Left colon (tissue), 2 donors: ENCODE measurements at regions of chr19 and their contacts with region 1.

Region 1: DNA sequence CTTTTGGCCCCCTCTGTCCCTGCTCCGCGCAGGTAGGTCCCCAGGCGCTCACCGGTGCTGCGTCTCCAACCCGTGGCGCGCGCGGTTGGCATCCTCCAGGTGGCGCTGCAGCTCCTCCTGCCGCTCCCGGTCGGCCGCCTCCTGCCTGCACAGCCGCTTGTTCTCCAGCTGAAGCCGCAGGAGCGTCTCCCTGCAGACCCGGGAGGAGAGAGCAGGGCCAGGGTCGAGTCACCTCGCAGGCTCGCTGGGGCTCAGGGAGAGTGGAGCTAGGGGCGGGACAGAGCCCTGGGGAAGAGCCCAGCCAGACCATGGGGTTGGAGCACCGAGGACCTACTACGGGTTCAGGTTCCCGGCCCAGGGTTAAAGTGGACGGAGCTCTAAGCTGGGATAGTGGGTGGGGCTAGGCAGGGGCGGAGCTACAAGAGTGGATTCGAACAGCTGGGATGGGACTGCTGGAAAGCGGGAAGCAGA is 9.3 kb downstream of the HOOK2 start:
- DNase-seq: peak; percentile 70 to 93
- ATAC-seq: peak; percentile 85

Region 2: DNA sequence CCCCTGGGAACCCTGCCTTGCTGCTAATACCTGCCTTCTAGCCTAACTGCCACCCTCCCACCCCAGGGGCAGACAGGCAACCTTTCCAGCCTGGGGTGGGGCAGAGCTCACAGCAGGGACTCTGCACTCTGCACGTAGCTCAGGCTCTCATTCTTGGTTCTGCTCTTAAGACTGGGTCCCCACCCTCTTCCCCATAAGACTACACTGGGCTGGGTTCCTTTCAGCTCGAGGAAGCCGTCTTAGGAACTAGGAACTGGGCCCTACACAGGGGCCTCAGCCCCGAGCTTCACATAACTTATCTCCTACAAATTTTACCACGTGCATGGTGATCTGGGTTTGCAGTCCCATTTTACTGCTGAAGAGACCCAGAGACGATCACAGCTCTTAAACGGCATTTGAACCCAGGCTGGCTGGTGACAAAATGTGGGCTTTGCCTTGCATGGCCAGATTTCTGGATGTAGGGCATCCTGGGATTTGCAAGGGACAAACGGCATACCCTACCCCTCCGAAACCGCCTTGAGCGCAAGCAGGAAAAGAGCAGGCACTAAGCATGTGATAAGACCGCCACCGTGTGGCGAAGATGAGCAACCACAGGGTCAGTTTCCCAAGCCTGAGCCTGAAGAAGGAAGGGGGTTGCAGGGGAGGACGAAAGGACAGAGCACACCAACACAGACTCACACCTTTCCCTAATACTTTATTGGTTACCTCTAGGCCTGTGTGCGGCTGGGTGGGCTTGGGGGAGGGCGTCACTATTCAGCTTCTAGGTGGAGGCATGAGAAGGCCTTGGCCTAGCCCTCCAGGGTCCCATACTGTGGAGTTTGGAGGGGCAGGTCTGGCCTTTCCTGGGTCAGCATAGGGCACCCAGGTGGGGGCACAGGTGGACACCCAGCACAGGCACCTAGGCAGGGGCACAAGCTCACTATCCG is 30.3 kb after region 1 on chr19:
- intact Hi-C with region 1: loop called (anchors 5 kb)
- DNase-seq: peak; percentile 74 to 83
- ATAC-seq: peak; percentile 39

Region 3: GRCh38 chr19:12801466-12802266 is 35.6 kb after region 1 on chr19 and contains the starts of genes PRDX2 and THSD8:
- intact Hi-C with region 1: loop called (anchors 5 kb)
- DNase-seq: peak; percentile 78 to 91
- ATAC-seq: peak; percentile 85
- total RNA-seq, gene PRDX2: 249 to 298 TPM
- total RNA-seq, gene THSD8: 3.2 to 4.4 TPM

Region 4: DNA sequence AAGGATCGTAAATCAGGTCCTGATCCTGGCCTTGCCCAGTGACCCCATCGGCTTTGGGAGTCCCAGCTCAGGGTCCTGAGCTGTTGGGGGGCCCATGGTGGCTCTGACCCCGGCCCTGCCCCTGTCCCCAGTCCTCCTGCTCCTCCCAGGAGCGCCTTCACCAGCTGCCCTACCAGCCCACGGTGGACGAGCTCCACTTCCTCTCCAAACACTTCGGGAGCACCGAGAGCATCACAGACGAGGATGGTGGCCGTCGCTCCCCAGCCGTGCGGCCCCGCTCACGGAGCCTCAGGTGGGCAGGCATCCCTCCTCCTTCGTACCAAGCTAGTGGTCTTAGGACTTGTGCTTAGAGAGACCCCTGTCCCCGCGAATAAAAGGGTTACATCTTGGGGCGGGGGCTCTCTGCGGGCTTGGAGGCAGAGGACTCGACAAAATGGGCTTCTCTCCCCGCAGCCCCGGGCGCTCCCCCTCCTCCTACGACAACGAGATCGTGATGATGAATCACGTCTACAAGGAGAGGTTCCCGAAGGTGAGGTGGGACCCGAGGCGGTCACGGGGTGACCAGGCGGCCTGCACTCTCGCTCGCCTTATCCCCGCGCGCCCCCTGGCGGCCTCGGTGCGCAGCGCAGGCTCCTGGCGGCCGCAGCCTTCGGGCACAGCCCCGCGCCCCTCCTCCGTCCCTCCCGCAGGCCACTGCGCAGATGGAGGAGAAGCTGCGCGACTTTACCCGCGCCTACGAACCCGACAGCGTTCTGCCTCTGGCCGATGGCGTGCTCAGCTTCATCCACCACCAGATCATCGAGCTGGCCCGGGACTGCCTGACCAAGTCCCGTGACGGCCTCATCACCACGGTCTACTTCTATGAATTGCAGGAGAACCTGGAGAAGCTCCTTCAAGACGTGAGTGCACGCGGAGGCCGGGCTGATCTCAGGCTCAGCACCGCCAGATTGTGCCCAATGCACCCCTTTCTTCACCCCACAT is 81.4 kb after region 1 on chr19:
- intact Hi-C with region 1: loop called (anchors 10 kb)
- DNase-seq: peak; percentile 72 to 86
- ATAC-seq: peak; percentile 99